ENCODE measurements at regions of chr12 and their contacts with region 1.

Region 1: GRCh38 chr12:62268956-62269355 is 8.8 kb downstream of the USP15 start:
- DNase-seq: no peak
- H3K4me3 Mint-ChIP-seq: peak overlapping the region; percentile 57
- H3K27ac Mint-ChIP-seq: no peak overlapping the region
- H3K4me1 Mint-ChIP-seq: peaks cover 68% of the 10 kb centered on the region
- H3K27me3 Mint-ChIP-seq: no peaks in the 10 kb centered on the region

Region 2: GRCh38 chr12:62301080-62301798 is 32.3 kb after region 1 on chr12:
- intact Hi-C with region 1: loop called (anchors 5 kb)
- DNase-seq: no peak
- H3K4me3 Mint-ChIP-seq: no peak overlapping the region
- H3K27ac Mint-ChIP-seq: peak overlapping the region; percentile 17
- H3K4me1 Mint-ChIP-seq: peaks cover 39% of the 10 kb centered on the region
- H3K27me3 Mint-ChIP-seq: no peaks in the 10 kb centered on the region

Region 3: DNA sequence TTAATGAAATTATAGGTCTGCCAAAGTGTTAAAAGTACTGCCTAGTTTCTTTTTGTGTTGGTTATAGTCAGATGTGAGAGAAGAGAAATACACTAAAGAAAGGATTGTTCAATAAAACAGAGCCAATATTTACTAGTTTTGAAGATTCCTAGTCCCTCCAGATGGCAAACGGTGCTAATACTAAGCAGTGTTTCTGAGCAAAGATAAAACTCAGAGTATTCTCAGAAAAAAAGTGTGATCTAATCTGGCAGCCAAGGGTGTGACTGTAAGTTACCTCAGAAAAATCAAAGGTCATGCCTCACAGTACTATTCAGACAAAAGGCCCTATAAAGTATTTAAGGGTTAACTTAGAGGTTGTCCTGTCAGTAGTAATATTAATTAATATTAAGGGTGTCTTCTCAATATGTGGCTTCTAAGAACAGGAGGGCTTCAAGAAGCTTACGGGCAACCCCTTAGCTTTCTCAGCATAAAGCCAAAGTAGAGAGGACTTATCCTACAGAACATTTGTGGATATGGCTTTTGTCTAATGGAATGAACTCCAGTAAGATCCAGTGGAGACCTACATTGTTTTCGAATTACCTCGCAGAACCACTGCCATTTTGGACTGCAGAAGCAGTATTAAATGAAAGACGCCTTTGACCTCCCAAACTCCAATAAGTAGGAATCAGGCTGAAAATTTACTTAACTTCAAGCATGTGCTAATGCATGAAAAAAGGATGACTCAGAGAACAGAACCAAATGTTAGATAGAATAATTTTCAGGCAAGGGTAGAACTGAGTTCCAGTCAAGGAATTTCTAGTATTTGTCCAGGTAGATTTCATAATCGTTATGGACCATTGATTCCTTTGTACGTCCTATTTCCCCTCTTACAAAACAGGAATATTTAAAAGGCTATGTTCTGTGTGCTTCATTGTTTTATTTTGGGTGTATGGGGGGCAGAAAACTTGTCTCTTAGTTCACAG is 37.9 kb after region 1 on chr12:
- intact Hi-C with region 1: loop called (anchors 2 kb)
- DNase-seq: no peak
- H3K4me3 Mint-ChIP-seq: no peak overlapping the region
- H3K27ac Mint-ChIP-seq: peak overlapping the region; percentile 16
- H3K4me1 Mint-ChIP-seq: peaks cover 36% of the 10 kb centered on the region
- H3K27me3 Mint-ChIP-seq: no peaks in the 10 kb centered on the region

Region 4: DNA sequence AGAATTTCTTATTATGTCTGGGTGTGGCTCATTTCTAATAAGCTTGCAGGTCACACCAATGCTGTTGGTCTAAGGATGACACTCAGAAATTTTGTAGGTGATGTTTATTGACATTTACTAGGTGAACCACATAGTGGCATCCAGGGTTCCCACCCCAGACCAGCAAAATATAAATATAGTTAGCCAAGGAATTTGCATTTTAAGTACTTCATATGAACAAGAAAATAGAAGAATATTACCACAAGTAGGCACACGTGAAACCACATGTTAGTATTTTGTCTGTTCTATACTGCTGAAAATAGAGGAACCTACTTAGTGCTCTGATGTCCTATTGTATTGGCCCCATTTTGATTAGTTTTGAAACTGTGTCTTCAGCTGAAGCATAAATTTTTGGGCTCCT is 62.4 kb after region 1 on chr12:
- intact Hi-C with region 1: no loop called
- DNase-seq: no peak
- H3K4me3 Mint-ChIP-seq: no peak overlapping the region
- H3K27ac Mint-ChIP-seq: no peak overlapping the region
- H3K4me1 Mint-ChIP-seq: peaks cover 27% of the 10 kb centered on the region
- H3K27me3 Mint-ChIP-seq: no peaks in the 10 kb centered on the region

Region 5: DNA sequence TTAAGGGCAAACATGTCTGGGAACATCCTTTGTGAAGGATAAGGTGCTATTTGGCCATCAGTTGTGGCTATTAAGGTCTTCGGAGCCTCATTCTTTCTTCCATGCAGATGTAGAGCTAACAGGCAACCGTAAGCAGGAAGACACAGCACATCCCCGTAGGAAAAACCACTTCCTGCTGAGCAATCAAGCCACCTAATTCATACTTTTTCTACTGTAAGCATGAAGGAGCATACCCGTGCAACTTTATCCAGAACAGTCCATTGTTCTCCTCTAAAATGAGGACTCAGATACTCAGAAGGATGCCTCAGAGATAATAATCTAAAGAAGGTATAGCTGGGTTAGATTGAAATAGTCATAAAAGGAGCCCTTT is 434.0 kb after region 1 on chr12:
- intact Hi-C with region 1: no loop called
- DNase-seq: no peak
- H3K4me3 Mint-ChIP-seq: no peak overlapping the region
- H3K27ac Mint-ChIP-seq: no peak overlapping the region
- H3K4me1 Mint-ChIP-seq: peaks cover 6% of the 10 kb centered on the region
- H3K27me3 Mint-ChIP-seq: peaks cover 8% of the 10 kb centered on the region

Measured in activated CD4-positive, alpha-beta T cell treated with anti-CD3 and anti-CD28 coated beads, Interleukin-2, amount 10 ng/mL, durations not matched to agents 24 days and 14 days (primary cell).